ENCODE measurements at regions of chr15 and their contacts with region 1.

Region 1: DNA sequence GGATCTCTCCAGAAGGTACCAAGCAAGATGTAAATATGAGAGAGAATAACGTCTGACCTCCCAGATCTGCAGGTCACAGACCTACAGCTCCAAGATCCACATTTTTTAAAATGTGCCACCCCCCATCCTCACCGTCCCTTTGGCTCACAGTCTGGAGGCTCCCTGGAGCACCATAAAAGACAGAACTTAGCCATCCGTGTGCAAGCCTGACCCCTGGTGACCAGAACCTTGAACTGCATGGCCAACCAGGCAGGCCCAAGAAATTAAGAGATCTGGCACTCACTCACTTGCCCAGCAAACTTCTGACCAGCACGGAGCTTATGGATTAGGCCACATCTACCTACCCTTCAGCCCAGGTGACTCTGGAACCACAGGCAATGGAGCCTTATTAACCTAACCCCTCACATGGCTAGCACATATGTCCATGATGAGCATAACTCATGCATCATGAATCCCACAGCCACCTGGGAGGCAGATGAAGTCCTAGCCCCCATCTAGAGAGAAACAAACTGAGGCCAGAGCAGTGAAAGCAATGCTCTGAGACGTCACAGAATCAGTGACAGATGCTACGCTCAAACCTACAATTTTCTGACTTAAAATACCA is 275.3 kb downstream of the UACA start:
- DNase-seq: peak; percentile 65
- H3K4me3 Mint-ChIP-seq: no peak overlapping the region
- H3K27ac Mint-ChIP-seq: no peak overlapping the region
- H3K4me1 Mint-ChIP-seq: peaks cover 68% of the 10 kb centered on the region
- H3K27me3 Mint-ChIP-seq: peaks cover 41% of the 10 kb centered on the region

Region 2: DNA sequence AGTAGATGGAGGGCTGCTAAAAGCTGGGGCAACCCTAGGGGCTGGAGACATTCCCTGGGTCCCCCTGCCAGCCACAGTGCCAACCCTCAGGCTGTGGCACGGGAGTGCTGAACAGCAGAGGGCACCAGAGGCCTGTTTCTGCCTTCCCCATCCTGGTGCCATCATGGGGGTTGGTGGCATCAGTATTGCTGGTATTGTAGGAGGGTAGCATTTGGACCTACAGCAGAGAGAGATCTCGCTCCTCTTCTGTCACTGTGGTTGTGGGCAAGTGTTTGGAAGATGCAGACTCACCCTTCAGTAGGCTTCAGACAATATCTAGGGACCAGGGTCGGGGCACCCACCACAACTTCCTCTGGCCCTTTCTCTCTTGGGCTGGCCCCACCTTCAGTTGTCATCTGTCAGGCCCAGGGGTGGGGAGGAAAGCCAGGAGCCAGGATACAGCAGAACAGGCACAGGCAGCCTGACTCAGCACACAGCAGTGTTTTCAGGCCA is 912.0 kb before region 1 on chr15:
- intact Hi-C with region 1: loop called (anchors 2 kb)
- DNase-seq: peak; percentile 38
- H3K4me3 Mint-ChIP-seq: no peak overlapping the region
- H3K27ac Mint-ChIP-seq: no peak overlapping the region
- H3K4me1 Mint-ChIP-seq: peaks cover 29% of the 10 kb centered on the region
- H3K27me3 Mint-ChIP-seq: peaks cover 10% of the 10 kb centered on the region

Region 3: GRCh38 chr15:69760890-69761568 is 727.1 kb before region 1 on chr15:
- intact Hi-C with region 1: loop called (anchors 1 kb)
- DNase-seq: peak; percentile 85
- H3K4me3 Mint-ChIP-seq: peak overlapping the region; percentile 37
- H3K27ac Mint-ChIP-seq: peak overlapping the region; percentile 92
- H3K4me1 Mint-ChIP-seq: peaks cover 65% of the 10 kb centered on the region
- H3K27me3 Mint-ChIP-seq: peaks cover 6% of the 10 kb centered on the region

Region 4: GRCh38 chr15:70259028-70259424 is 229.1 kb before region 1 on chr15:
- intact Hi-C with region 1: loop called (anchors 2 kb)
- DNase-seq: peak; percentile 37
- H3K4me3 Mint-ChIP-seq: no peak overlapping the region
- H3K27ac Mint-ChIP-seq: no peak overlapping the region
- H3K4me1 Mint-ChIP-seq: peaks cover 35% of the 10 kb centered on the region
- H3K27me3 Mint-ChIP-seq: peaks cover 46% of the 10 kb centered on the region

Region 5: GRCh38 chr15:70535071-70535954 is 47.2 kb after region 1 on chr15:
- intact Hi-C with region 1: loop called (anchors 2 kb)
- DNase-seq: peak; percentile 62
- H3K4me3 Mint-ChIP-seq: peak overlapping the region; percentile 72
- H3K27ac Mint-ChIP-seq: peak overlapping the region; percentile 73
- H3K4me1 Mint-ChIP-seq: peaks cover 34% of the 10 kb centered on the region
- H3K27me3 Mint-ChIP-seq: peaks cover 18% of the 10 kb centered on the region

Region 6: GRCh38 chr15:70687482-70687881 is 199.4 kb after region 1 on chr15:
- intact Hi-C with region 1: no loop called
- DNase-seq: no peak
- H3K4me3 Mint-ChIP-seq: no peak overlapping the region
- H3K27ac Mint-ChIP-seq: no peak overlapping the region
- H3K4me1 Mint-ChIP-seq: no peaks in the 10 kb centered on the region
- H3K27me3 Mint-ChIP-seq: peaks cover 42% of the 10 kb centered on the region